ENCODE measurements at regions of chr20 and their contacts with region 1.

Region 1: DNA sequence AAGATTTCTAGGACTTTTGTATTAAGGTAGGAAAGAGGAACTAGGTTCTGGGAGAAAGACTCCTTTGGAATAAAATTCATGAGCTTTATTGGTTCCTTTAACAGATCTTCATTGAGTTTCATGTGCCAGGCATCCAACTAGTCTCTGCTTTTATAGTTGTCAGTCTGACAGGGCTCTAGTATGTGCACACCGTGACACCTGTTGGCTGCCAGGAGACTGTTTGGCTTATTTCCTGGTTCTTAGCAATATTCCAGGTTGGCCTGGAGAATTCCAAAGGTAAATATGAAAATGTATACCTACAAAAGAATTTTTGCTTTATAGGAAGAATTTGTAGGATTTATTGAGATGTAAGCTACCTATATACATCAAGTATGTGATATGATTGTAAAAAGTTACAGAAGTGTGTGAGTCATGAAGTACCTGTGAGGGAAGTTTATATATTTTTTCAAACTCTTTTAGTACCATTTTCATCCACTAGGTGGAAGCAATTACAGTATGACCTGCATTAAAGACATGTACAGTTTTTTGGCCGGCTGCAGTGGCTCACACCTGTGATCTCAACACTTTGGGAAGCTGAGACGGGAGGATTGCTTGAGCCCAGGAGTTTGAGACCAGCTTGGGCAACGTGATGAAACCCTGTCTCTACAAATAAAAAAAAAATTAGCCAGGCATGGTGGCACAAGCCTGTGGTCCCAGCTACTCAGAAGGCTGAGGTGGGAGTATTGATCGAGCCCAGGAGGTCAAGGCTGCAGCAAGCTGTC is 35.2 kb downstream of the NDUFAF5 start:
- DNase-seq: peak; percentile 32 to 49
- H3K4me3 ChIP-seq: no peak overlapping the region
- H3K4me1 ChIP-seq: peaks cover 4% of the 10 kb centered on the region
- H3K27me3 ChIP-seq: no peaks in the 10 kb centered on the region

Region 2: DNA sequence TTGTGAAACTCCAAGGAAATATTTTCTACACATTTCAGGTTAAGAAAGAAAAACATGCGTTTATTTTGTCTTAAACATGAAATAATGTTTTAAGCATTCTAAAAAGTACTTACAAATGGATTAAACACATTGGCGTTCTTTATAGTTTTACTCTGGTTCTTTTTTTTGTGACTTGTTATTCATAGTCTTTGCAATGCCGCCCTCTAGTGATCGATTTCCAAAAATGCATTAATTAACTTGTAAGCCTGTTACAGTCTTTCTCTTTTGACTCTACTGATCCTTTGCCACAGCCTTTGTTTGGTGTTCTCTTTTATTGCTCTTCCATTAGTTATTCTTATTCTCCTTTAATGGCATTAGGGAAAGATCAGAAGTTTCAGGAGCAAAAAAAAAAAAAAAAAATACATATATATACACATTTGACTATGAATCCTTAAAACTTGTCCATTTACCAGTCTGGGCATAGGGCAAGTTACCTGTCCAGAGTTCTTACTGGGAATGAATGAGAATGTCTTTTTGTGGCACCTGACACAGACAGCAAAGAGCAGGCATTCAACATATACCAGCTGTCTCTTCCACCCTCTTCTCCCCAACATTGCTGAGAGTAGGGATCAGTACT is 235.2 kb after region 1 on chr20:
- in situ Hi-C with region 1: loop called (anchors 5 kb)
- DNase-seq: peak; percentile 43 to 58
- H3K4me3 ChIP-seq: no peak overlapping the region
- H3K4me1 ChIP-seq: no peaks in the 10 kb centered on the region
- H3K27me3 ChIP-seq: 0 out of 2 replicates have a peak, but pooled peaks cover 6% of the 10 kb centered on the region

Measured in HAP-1 (cell line).